ENCODE measurements at regions of chr3 and their contacts with region 1.

Region 1: DNA sequence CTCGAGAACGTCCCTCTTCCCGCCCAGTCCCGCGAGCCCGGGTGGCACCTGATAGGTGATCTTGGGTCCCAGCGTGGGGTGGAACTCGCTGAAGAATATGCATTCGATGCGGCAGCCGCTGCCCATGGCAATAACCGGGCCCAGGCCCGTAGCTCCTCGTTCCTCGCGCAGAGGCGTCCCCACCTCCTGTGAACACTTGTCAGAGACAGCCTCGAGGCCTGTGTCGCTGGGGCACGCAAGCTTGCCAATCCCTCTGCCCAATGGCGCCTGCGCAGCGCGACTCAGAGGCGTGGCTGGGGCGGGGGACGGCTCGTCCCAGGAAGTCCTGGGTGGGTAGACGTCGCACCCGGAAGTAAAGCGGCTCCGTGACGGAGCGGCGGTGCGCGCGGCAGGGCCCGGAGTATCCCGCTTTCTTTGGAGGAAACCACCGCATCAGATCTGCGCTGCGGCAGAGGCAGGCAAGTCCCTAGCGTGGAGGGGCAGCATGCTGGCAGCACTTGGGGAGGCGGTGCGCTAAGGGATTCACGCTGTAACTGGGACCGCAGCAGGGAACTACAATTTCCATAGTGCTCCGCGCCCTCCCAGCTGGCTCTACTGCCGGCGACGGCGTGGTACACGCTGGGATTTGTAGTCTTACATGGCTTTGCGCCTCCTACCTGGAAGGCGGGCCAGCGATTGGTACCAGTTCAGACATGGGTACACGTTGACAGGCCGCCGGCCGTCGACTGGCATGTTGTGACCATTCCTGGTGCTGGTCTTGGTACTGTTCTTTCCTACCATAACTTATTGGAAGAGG is at the starts of genes CYB561D2 and NPRL2:
- DNase-seq: peak; percentile 72
- H3K4me3 ChIP-seq: peak within 1 kb of the TSS; percentile 97
- H3K27ac ChIP-seq: peak within 1 kb of the TSS; percentile 80
- H3K27me3 ChIP-seq: no peaks in the 10 kb centered on the region
- CTCF ChIP-seq: no peak
- polyA plus RNA-seq, gene CYB561D2: 14.5 and 19.7 TPM in 2 replicates
- polyA plus RNA-seq, gene NPRL2: 25.6 and 30.2 TPM in 2 replicates

Region 2: DNA sequence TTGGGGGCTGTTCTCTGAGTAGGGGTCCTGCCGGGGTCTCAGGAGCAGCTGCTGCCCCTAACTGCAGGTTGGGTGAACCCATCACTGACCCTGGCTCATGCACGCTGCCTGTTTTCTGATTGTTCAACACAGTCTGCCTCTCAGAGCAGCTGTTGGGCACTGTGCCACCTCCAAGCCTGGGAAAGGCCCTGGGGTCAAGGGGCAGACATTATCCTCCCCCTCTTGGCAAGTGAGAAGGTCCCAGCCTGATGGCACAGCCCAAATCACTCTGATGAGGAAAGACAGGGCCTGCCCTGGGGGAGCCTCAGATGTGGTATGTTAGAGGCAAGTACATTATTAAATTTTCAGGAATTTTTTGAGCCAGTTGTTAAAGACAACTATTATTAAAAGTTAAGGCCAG is 173.4 kb before region 1 on chr3:
- CTCF ChIA-PET with region 1: no interaction called
- POLR2A ChIA-PET with region 1: no interaction called
- DNase-seq: no peak
- H3K4me3 ChIP-seq: no peak overlapping the region
- H3K27ac ChIP-seq: no peak overlapping the region
- H3K27me3 ChIP-seq: no peaks in the 10 kb centered on the region
- CTCF ChIP-seq: no peak

Region 3: GRCh38 chr3:50337191-50337841 is 13.4 kb before region 1 on chr3:
- CTCF ChIA-PET with region 1: interaction called, 9 read pairs
- POLR2A ChIA-PET with region 1: interaction called, 11 read pairs
- DNase-seq: peak; percentile 99
- H3K4me3 ChIP-seq: peak overlapping the region; percentile 98
- H3K27ac ChIP-seq: peak overlapping the region; percentile 96
- H3K27me3 ChIP-seq: no peaks in the 10 kb centered on the region
- CTCF ChIP-seq: no peak

Region 4: GRCh38 chr3:50427984-50428633 is 77.4 kb after region 1 on chr3:
- CTCF ChIA-PET with region 1: interaction called, 11 read pairs
- POLR2A ChIA-PET with region 1: no interaction called
- DNase-seq: no peak
- H3K4me3 ChIP-seq: no peak overlapping the region
- H3K27ac ChIP-seq: no peak overlapping the region
- H3K27me3 ChIP-seq: peaks cover 31% of the 10 kb centered on the region
- CTCF ChIP-seq: no peak

Region 5: GRCh38 chr3:50542177-50543034 is 191.7 kb after region 1 on chr3:
- CTCF ChIA-PET with region 1: interaction called, 76 read pairs
- POLR2A ChIA-PET with region 1: no interaction called
- DNase-seq: peak; percentile 41
- H3K4me3 ChIP-seq: no peak overlapping the region
- H3K27ac ChIP-seq: no peak overlapping the region
- H3K27me3 ChIP-seq: peaks cover 34% of the 10 kb centered on the region
- CTCF ChIP-seq: peak; percentile 91

Region 6: DNA sequence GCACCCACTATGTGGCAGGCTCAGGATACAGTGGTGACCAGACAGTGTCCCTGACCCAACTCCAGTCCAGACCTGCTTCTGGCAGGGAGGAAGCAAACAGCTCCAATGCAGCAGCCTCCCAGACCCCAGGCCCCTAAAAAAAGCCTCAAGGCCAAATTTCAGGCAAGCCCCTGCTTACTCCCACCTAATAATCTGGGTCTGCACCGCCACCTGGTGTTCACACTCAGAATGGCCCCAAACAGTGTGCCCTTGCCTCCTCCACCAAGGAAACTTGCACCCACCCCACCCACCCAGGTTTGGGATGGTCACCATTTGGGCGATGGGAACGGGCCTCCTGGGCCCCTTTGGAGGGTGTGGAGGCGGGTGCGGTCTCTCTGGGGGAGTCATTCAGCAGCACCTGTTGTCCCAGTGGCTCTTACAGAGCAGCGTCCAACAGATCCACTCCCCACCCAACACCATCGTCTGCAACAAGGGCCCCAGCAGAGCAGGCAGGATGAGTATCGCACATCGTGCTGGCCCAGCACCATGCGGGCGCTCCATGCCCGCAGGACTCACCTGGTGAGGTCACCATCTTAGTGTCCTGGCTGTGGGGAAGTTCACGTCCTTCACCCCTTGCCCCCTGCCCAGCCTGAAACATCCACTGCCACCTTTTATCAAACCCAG is 199.5 kb after region 1 on chr3:
- CTCF ChIA-PET with region 1: interaction called, 53 read pairs
- POLR2A ChIA-PET with region 1: no interaction called
- DNase-seq: no peak
- H3K4me3 ChIP-seq: no peak overlapping the region
- H3K27ac ChIP-seq: no peak overlapping the region
- H3K27me3 ChIP-seq: peaks cover 14% of the 10 kb centered on the region
- CTCF ChIP-seq: peak; percentile 73

Region 7: GRCh38 chr3:51391075-51391567 is 1040.4 kb after region 1 on chr3 and contains the start of gene RBM15B:
- CTCF ChIA-PET with region 1: interaction called, 11 read pairs
- POLR2A ChIA-PET with region 1: no interaction called
- DNase-seq: peak; percentile 89
- H3K4me3 ChIP-seq: peak within 1 kb of the TSS; percentile 72
- H3K27ac ChIP-seq: peak within 1 kb of the TSS; percentile 43
- H3K27me3 ChIP-seq: no peaks in the 10 kb centered on the region
- CTCF ChIP-seq: no peak; the same call in 1 of the 2 replicates
- polyA plus RNA-seq, gene RBM15B: 12.5 and 17.0 TPM in 2 replicates